MCF 10A (cell line): ENCODE measurements at regions of chr4 and their contacts with region 1.

Region 1: DNA sequence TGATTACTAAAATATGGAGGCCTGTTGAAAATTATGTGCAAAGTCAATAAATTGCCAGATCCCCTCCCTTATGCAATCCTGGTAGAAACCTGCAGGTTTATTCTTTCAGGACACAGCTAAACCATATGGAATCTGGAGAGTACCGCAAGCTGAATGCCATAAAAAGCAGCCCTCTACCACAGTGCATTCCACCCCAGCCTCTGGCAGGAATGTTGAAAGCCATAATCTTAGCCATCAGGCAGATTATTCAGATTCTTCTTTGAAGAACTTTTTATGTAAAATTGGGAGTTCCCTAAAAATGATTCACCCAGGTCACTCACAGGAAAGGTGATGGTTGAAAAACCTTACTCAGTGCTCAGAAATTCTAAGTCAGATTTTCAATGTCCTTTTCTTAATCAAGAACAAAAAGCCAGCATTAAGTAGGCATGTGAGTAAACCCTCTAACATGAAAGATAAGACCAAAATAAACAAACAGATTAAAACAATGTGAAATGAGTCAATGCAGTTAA is 227.1 kb downstream of the FSTL5 start:
- DNase-seq: peak; percentile 77
- H3K4me3 Mint-ChIP-seq: no peak overlapping the region
- H3K27ac Mint-ChIP-seq: peak overlapping the region; percentile 67
- H3K4me1 Mint-ChIP-seq: peaks cover 17% of the 10 kb centered on the region
- H3K27me3 Mint-ChIP-seq: no peaks in the 10 kb centered on the region
- CTCF ChIP-seq: no peak

Region 2: GRCh38 chr4:161573836-161574235 is 362.8 kb before region 1 on chr4:
- CTCF ChIA-PET with region 1: no interaction called
- POLR2A ChIA-PET with region 1: no interaction called
- intact Hi-C with region 1: loop called (anchors 5 kb)
- DNase-seq: peak; percentile 9
- H3K4me3 Mint-ChIP-seq: no peak overlapping the region
- H3K27ac Mint-ChIP-seq: no peak overlapping the region
- H3K4me1 Mint-ChIP-seq: peaks cover 6% of the 10 kb centered on the region
- H3K27me3 Mint-ChIP-seq: no peaks in the 10 kb centered on the region
- CTCF ChIP-seq: no peak